Activated CD4-positive, alpha-beta memory T cell treated with anti-CD3 and anti-CD28 coated beads for 36 hours (primary cell): ENCODE measurements at regions of chrX and their contacts with region 1.

Region 1: DNA sequence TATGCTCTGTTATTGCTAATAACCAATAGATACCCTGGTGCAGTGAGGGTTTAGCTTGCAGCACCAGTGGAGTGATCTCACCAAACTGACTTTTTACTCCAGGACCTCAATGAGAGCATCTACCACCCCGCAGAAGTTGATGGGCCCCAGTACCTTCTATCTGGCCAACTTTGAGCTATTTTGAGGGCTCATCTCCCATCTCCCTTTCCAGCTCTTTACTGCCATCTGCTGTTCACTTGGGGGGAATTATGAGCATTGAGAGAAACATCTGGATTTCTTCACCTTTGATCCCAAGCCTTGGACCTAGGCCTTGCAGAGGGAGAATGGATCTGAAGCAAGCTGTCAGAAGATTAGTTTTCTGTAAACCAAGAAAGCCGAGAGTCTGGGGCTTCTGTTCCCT is 143.6 kb downstream of the TMEM164 start:
- DNase-seq: peak; percentile 16
- H3K4me3 Mint-ChIP-seq: no peak overlapping the region
- H3K27ac Mint-ChIP-seq: no peak overlapping the region
- H3K4me1 Mint-ChIP-seq: peaks cover 5% of the 10 kb centered on the region
- H3K27me3 Mint-ChIP-seq: no peaks in the 10 kb centered on the region

Region 2: DNA sequence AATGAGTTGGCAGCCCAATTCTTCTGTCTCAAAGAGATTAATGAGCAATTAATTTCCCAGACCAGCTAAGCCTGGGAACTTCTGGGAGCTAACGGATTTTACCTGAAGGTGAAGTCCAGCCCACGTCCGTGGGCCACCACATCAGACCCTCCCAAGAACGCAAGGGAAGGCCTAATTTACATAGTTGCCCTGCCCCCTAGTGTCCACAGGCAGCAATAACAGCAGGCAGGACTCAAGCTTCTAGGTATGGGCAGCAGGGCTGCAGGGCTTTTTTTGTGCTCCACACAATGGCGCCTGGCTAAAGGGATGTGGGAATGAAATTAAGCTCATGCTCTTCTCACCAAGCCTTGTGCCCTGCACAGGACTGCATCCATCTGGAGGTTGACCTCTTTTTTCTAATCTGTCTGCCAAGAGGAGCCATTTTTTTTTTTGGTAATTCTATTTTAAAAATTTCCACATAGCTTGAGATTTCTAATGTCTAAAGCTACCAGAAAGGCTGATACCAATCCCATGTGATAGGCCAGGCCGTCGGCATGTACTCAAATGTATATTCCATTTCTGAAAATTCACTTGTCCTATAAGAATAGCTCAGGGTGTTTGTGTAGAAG is 255.5 kb before region 1 on chrX:
- CTCF ChIA-PET with region 1: interaction called, 19 read pairs
- POLR2A ChIA-PET with region 1: no interaction called
- intact Hi-C with region 1: no loop called
- DNase-seq: peak; percentile 52
- H3K4me3 Mint-ChIP-seq: no peak overlapping the region
- H3K27ac Mint-ChIP-seq: no peak overlapping the region
- H3K4me1 Mint-ChIP-seq: no peaks in the 10 kb centered on the region
- H3K27me3 Mint-ChIP-seq: no peaks in the 10 kb centered on the region

Region 3: GRCh38 chrX:110002300-110003166 is 144.0 kb before region 1 on chrX and contains the start of gene TMEM164:
- CTCF ChIA-PET with region 1: interaction called, 5 read pairs
- POLR2A ChIA-PET with region 1: no interaction called
- intact Hi-C with region 1: loop called (anchors 5 kb)
- DNase-seq: peak; percentile 87
- H3K4me3 Mint-ChIP-seq: peak within 1 kb of the TSS; percentile 81
- H3K27ac Mint-ChIP-seq: peak within 1 kb of the TSS; percentile 76
- H3K4me1 Mint-ChIP-seq: peaks cover 34% of the 10 kb centered on the region
- H3K27me3 Mint-ChIP-seq: no peaks in the 10 kb centered on the region
- total RNA-seq, gene TMEM164: 10.1 to 13.2 TPM

Region 4: DNA sequence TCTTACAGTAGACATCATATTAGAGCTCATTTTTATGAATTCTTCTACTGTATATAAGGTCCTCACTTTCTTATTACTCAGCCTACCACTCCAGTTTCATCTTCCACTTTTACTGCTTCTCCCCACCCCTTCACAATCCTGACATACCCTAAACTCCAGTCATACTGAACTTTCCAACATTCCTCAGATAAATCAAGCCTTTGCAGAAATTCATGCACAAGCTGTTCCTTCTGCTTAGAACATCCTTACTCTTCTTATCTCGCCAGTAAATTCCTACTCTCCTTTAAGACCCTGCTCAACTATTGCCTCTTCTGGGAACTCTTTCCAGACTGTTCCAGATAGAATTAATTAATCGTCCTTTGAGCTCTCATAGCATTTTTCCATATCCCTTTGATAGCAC is 236.9 kb after region 1 on chrX:
- CTCF ChIA-PET with region 1: no interaction called
- POLR2A ChIA-PET with region 1: no interaction called
- intact Hi-C with region 1: no loop called
- DNase-seq: no peak
- H3K4me3 Mint-ChIP-seq: no peak overlapping the region
- H3K27ac Mint-ChIP-seq: no peak overlapping the region
- H3K4me1 Mint-ChIP-seq: no peaks in the 10 kb centered on the region
- H3K27me3 Mint-ChIP-seq: no peaks in the 10 kb centered on the region

Region 5: GRCh38 chrX:110402479-110403230 is 256.1 kb after region 1 on chrX:
- CTCF ChIA-PET with region 1: interaction called, 522 read pairs
- POLR2A ChIA-PET with region 1: no interaction called
- intact Hi-C with region 1: no loop called
- DNase-seq: no peak
- H3K4me3 Mint-ChIP-seq: no peak overlapping the region
- H3K27ac Mint-ChIP-seq: no peak overlapping the region
- H3K4me1 Mint-ChIP-seq: no peaks in the 10 kb centered on the region
- H3K27me3 Mint-ChIP-seq: no peaks in the 10 kb centered on the region

Region 6: GRCh38 chrX:110412971-110413721 is 266.6 kb after region 1 on chrX:
- CTCF ChIA-PET with region 1: interaction called, 522 read pairs
- POLR2A ChIA-PET with region 1: no interaction called
- intact Hi-C with region 1: no loop called
- DNase-seq: peak; percentile 76
- H3K4me3 Mint-ChIP-seq: no peak overlapping the region
- H3K27ac Mint-ChIP-seq: no peak overlapping the region
- H3K4me1 Mint-ChIP-seq: peaks cover 3% of the 10 kb centered on the region
- H3K27me3 Mint-ChIP-seq: no peaks in the 10 kb centered on the region

Region 7: DNA sequence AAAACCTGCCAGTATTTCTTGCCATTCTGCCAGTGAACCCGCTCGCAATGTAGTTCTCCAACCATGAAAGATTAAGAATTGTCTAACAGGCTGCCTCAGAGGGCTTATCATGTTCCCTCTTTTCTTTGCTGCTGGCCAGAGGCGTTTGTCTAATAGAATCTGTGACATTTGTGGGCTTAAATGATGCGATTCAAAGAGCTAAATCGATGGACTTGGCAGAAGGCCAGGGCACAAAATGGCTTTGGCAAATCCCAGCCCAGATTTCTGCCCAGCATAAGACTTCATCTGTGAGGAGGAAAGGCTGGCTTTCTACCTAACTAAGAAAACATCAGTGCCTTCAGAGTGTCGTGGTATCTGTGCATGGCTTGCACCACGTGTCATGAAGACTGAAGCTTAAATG is 1809.4 kb after region 1 on chrX:
- CTCF ChIA-PET with region 1: no interaction called
- POLR2A ChIA-PET with region 1: no interaction called
- intact Hi-C with region 1: no loop called
- DNase-seq: no peak
- H3K4me3 Mint-ChIP-seq: no peak overlapping the region
- H3K27ac Mint-ChIP-seq: no peak overlapping the region
- H3K4me1 Mint-ChIP-seq: no peaks in the 10 kb centered on the region
- H3K27me3 Mint-ChIP-seq: no peaks in the 10 kb centered on the region